Dendritic cell treated with granulocyte-macrophage colony-stimulating factor and Interleukin-4, amounts not matched to agents 40 ng/mL and 50 ng/mL, for 4 days (primary cell): ENCODE measurements at regions of chr1 and their contacts with region 1.

Region 1: DNA sequence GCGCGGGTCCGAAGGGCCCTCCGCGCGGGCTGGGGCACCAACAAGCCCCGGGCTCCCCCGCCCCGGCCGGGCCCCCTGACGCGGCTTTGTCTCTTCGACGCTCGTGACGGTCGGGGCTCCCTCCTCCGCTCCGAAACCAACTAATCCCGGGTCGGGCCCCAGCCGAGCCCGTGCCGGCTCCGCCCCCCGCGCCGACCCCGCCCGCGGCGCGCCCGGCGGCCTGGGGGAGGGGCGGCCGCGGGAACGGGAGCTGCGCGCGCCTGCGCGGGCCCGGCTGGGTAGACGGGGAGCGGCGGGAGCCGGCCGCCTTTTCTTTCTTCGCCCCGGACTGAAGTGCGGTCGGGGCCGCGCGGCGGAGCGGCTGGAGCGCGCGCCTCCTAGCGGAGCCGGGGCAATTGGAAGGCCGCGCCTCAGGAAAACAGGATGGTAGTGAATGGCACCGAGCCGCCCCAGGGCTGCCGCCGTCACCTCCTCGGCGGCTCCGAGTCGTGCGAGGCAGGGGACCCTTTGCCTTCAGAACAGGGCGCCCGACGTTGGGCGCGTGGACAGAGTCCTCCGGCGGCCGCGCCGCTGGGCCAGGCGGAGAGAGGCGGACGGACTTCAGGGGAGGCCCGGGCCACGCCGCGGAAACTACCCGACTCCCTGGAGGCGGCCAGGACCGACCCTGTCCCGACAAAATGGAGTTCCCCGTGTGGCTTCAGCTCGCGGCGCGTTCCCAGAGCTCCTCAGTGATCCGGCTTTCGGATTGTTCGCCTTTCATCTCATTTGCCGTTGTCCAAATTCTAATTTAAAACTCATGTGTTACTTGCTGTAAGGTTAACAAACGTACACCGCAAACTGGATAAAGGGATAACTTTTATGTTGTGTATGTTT is at the start of gene TP53BP2:
- H3K4me3 Mint-ChIP-seq: peak within 1 kb of the TSS; percentile 89
- H3K27ac Mint-ChIP-seq: peak within 1 kb of the TSS; percentile 100
- H3K4me1 Mint-ChIP-seq: peaks cover 34% of the 10 kb centered on the region
- H3K27me3 Mint-ChIP-seq: no peaks in the 10 kb centered on the region

Region 2: GRCh38 chr1:223831755-223832636 is 14.1 kb before region 1 on chr1:
- intact Hi-C with region 1: loop called (anchors 1 kb)
- H3K4me3 Mint-ChIP-seq: peak overlapping the region; percentile 65
- H3K27ac Mint-ChIP-seq: peak overlapping the region; percentile 89
- H3K4me1 Mint-ChIP-seq: peaks cover 21% of the 10 kb centered on the region
- H3K27me3 Mint-ChIP-seq: no peaks in the 10 kb centered on the region